ENCODE measurements at regions of chr3 and their contacts with region 1.

Region 1: GRCh38 chr3:15332405-15333098 is at the start of gene SH3BP5:
- DNase-seq: peak; percentile 68
- H3K4me3 ChIP-seq: peak within 1 kb of the TSS; percentile 91 to 93 (median 92)
- H3K27ac ChIP-seq: peak within 1 kb of the TSS; percentile 61
- H3K4me1 ChIP-seq: peaks cover 37% of the 10 kb centered on the region
- H3K27me3 ChIP-seq: no peaks in the 10 kb centered on the region
- CTCF ChIP-seq: peak; percentile 46 to 72
- POLR2A ChIP-seq: peak; percentile 83
- total RNA-seq, gene SH3BP5: 64.8 and 76.3 TPM in 2 replicates

Region 2: GRCh38 chr3:15032650-15033049 is 299.9 kb before region 1 on chr3:
- CTCF ChIA-PET with region 1: no interaction called
- POLR2A ChIA-PET with region 1: no interaction called
- dilution Hi-C with region 1: no loop called
- intact Hi-C with region 1: no loop called
- DNase-seq: no peak
- H3K4me3 ChIP-seq: no peak overlapping the region
- H3K27ac ChIP-seq: no peak overlapping the region
- H3K4me1 ChIP-seq: no peaks in the 10 kb centered on the region
- H3K27me3 ChIP-seq: no peaks in the 10 kb centered on the region
- CTCF ChIP-seq: no peak
- POLR2A ChIP-seq: no peak

Region 3: GRCh38 chr3:15291589-15292541 is 40.7 kb before region 1 on chr3:
- CTCF ChIA-PET with region 1: interaction called, 18 read pairs
- POLR2A ChIA-PET with region 1: no interaction called
- dilution Hi-C with region 1: no loop called
- intact Hi-C with region 1: loop called (anchors 1 kb)
- DNase-seq: peak; percentile 77
- H3K4me3 ChIP-seq: no peak overlapping the region
- H3K27ac ChIP-seq: peak overlapping the region; percentile 85
- H3K4me1 ChIP-seq: peaks cover 51% of the 10 kb centered on the region
- H3K27me3 ChIP-seq: no peaks in the 10 kb centered on the region
- CTCF ChIP-seq: no peak
- POLR2A ChIP-seq: no peak

Region 4: GRCh38 chr3:15300323-15301078 is 32.1 kb before region 1 on chr3:
- CTCF ChIA-PET with region 1: interaction called, 46 read pairs
- POLR2A ChIA-PET with region 1: no interaction called
- dilution Hi-C with region 1: no loop called
- intact Hi-C with region 1: loop called (anchors 1 kb)
- DNase-seq: peak; percentile 94
- H3K4me3 ChIP-seq: no peak overlapping the region
- H3K27ac ChIP-seq: peak overlapping the region; percentile 75
- H3K4me1 ChIP-seq: peaks cover 41% of the 10 kb centered on the region
- H3K27me3 ChIP-seq: no peaks in the 10 kb centered on the region
- CTCF ChIP-seq: no peak
- POLR2A ChIP-seq: no peak

Region 5: GRCh38 chr3:15319575-15319974 is 13.0 kb before region 1 on chr3:
- CTCF ChIA-PET with region 1: interaction called, 21 read pairs
- POLR2A ChIA-PET with region 1: no interaction called
- dilution Hi-C with region 1: no loop called
- intact Hi-C with region 1: no loop called
- DNase-seq: no peak
- H3K4me3 ChIP-seq: no peak overlapping the region
- H3K27ac ChIP-seq: no peak overlapping the region
- H3K4me1 ChIP-seq: peaks cover 22% of the 10 kb centered on the region
- H3K27me3 ChIP-seq: no peaks in the 10 kb centered on the region
- CTCF ChIP-seq: no peak
- POLR2A ChIP-seq: no peak

Region 6: DNA sequence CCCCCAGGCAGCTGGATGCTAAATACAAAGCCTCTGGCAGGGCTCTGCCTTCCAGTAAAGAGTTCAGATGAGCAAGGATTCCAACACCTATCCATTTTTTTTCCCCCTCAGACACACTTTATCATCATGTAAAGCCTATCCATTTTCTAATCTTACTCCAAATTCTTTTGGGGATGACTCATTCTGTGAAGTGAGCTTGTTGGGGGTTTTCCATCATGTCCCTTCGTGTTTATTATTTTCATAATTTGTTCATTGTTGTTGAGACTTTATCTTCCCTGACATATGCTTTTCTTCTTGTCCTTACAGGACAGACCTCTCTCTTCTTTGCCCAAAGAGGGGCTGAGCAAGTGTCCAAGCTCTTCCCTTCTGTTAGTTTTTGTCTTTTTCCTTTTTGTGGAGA is 34.5 kb after region 1 on chr3:
- CTCF ChIA-PET with region 1: interaction called, 11 read pairs
- POLR2A ChIA-PET with region 1: no interaction called
- dilution Hi-C with region 1: no loop called
- intact Hi-C with region 1: no loop called
- DNase-seq: peak; percentile 56
- H3K4me3 ChIP-seq: no peak overlapping the region
- H3K27ac ChIP-seq: peak overlapping the region; percentile 26
- H3K4me1 ChIP-seq: peaks cover 28% of the 10 kb centered on the region
- H3K27me3 ChIP-seq: no peaks in the 10 kb centered on the region
- CTCF ChIP-seq: no peak
- POLR2A ChIP-seq: no peak

Region 7: GRCh38 chr3:15377961-15378791 is 45.6 kb after region 1 on chr3:
- CTCF ChIA-PET with region 1: interaction called, 11 read pairs
- POLR2A ChIA-PET with region 1: no interaction called
- dilution Hi-C with region 1: no loop called
- intact Hi-C with region 1: loop called (anchors 1 kb)
- DNase-seq: peak; percentile 96
- H3K4me3 ChIP-seq: no peak overlapping the region
- H3K27ac ChIP-seq: peak overlapping the region; percentile 71
- H3K4me1 ChIP-seq: peaks cover 2% of the 10 kb centered on the region
- H3K27me3 ChIP-seq: no peaks in the 10 kb centered on the region
- CTCF ChIP-seq: peak; percentile 81 to 91
- POLR2A ChIP-seq: no peak